Endothelial cell of umbilical vein (primary cell): ENCODE measurements at regions of chr20 and their contacts with region 1.

Region 1: DNA sequence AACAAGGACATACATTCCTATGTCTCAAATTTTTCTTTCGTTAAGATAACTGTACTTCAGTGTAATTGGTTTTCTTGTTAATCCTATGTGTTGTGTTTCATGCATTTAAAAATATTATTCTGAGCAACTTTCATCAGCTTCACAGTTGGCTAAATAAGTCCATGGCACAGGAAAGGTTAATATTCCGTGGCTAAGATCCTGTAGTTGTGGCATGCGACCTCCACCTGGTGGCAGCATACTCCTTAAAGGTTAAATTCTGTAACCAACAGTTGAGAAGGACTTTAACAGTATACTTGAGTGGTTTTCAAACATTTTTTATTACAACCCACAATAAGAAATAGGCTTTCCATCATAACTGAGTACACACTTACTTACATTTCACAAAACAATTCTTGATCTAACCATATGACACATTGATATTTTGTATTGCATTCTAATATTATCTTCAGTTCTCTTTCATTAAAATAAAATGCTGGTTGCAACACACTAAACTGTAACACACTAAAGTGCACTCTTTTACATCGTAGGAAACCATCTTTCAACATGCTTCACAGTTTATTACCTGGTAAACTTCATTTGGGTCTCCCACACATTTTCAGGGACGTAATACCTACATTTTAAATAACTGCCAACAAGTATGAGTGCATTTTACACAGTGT is 118.3 kb downstream of the SLX4IP start:
- DNase-seq: peak; percentile 84
- H3K4me3 ChIP-seq: no peak overlapping the region
- H3K27ac ChIP-seq: no peak overlapping the region
- H3K4me1 ChIP-seq: peaks cover 15% of the 10 kb centered on the region
- H3K27me3 ChIP-seq: no peaks in the 10 kb centered on the region
- CTCF ChIP-seq: peak; percentile 64 to 70
- POLR2A ChIP-seq: no peak

Region 2: DNA sequence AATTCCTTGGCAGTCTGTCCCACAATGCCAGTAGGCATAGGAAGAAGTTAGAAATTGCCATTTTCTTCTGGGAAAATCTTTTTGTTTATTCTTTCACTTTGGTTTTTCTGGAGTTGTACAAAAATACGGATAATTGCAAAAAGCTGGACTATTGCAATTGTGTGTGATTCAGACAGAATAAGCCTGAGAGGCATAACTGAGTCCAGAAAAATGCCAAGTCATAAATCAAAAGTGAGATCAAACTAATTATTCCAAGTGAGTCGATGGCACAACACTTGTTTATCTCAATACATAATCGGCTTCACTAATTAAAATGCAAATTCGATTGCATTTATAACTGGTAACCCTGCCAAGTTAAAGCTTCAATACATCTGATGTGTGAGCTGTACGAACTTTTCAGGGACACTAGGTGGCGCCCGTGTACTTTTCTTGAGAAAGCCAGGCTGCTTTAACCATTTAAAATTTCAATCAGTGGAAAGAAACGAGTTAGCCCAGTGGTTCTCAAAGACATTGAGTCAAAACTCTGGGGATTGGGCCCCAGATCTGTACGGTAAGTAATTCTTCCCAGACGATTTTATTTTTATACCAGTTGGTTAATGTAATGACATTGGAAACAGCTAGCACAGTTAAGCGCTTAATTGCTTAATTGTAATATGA is 936.5 kb before region 1 on chr20:
- CTCF ChIA-PET with region 1: interaction called, 4 read pairs
- POLR2A ChIA-PET with region 1: no interaction called
- dilution Hi-C with region 1: no loop called
- intact Hi-C with region 1: loop called (anchors 10 kb)
- DNase-seq: peak; percentile 62
- H3K4me3 ChIP-seq: no peak overlapping the region
- H3K27ac ChIP-seq: no peak overlapping the region
- H3K4me1 ChIP-seq: no peaks in the 10 kb centered on the region
- H3K27me3 ChIP-seq: peaks cover 7 to 8% of the 10 kb centered on the region in 2 experiments
- CTCF ChIP-seq: peak; percentile 69 to 70
- POLR2A ChIP-seq: no peak

Region 3: DNA sequence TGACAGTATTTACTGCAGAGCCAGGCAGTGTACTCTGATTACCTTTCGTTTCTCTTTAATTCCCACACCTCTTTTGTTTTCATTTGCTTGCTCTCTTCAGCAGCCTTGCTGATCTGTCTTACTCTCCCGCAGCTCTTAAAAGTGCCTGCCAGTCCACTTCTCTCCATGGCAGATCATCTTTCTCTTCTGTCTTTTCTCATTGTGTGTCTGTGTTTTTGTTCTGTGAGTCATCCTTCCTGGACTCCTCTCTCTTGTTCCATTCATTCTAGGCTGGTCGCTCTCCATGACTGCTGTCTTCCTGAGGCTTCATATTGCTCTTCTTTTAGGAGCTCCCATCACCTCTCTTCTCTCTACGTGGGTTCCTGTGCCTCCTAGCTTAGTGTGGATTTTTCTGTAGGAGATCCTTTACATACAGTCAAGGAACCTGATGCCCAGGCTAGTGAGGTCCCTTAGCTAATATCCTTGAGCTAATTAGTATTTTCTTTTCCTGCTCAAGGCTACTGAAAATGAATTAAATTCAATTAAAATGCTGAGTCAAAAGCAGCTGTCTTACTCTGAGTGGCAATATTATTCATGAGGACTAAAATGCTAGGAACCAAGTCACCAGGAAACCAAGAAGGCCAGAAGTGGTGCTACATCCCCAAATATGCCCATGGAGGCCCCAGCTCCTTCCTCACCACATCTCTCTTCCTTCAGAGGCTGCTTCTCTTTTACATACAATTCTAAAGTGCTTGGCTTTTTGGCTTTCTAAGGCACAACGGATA is 32.2 kb before region 1 on chr20:
- CTCF ChIA-PET with region 1: interaction called, 10 read pairs
- POLR2A ChIA-PET with region 1: no interaction called
- dilution Hi-C with region 1: no loop called
- intact Hi-C with region 1: no loop called
- DNase-seq: peak; percentile 77
- H3K4me3 ChIP-seq: no peak overlapping the region
- H3K27ac ChIP-seq: peak overlapping the region; percentile 8
- H3K4me1 ChIP-seq: peaks cover 28% of the 10 kb centered on the region
- H3K27me3 ChIP-seq: no peaks in the 10 kb centered on the region
- CTCF ChIP-seq: no peak
- POLR2A ChIP-seq: no peak

Region 4: DNA sequence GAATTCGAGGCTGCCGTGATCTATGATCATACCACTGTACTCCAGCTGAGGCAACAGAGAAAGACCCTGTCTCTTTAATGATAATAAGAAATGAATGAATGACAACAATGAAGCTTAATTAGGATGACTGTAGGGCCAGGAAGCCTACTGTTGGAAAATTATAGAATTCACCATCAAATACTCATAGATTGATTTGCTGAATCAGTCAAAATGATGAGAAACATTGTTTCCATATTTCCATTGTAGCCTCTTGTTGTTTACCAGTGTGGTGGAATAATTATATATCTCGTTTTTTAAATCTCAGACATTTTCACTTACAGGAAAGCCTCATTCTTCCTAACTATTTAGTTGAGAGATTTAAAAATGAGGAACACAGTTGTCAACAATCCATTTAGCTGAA is 24.2 kb after region 1 on chr20:
- CTCF ChIA-PET with region 1: no interaction called
- POLR2A ChIA-PET with region 1: no interaction called
- dilution Hi-C with region 1: no loop called
- intact Hi-C with region 1: no loop called
- DNase-seq: no peak
- H3K4me3 ChIP-seq: no peak overlapping the region
- H3K27ac ChIP-seq: no peak overlapping the region
- H3K4me1 ChIP-seq: peaks cover 25% of the 10 kb centered on the region
- H3K27me3 ChIP-seq: no peaks in the 10 kb centered on the region
- CTCF ChIP-seq: no peak
- POLR2A ChIP-seq: no peak

Region 5: GRCh38 chr20:10761232-10761631 is 207.8 kb after region 1 on chr20:
- CTCF ChIA-PET with region 1: interaction called, 3 read pairs
- POLR2A ChIA-PET with region 1: no interaction called
- dilution Hi-C with region 1: no loop called
- intact Hi-C with region 1: loop called (anchors 10 kb)
- DNase-seq: peak; percentile 93
- H3K4me3 ChIP-seq: no peak overlapping the region
- H3K27ac ChIP-seq: peak overlapping the region; percentile 78
- H3K4me1 ChIP-seq: peaks cover 41% of the 10 kb centered on the region
- H3K27me3 ChIP-seq: no peaks in the 10 kb centered on the region
- CTCF ChIP-seq: no peak
- POLR2A ChIP-seq: peak; percentile 36

Region 6: GRCh38 chr20:10922941-10923340 is 369.5 kb after region 1 on chr20:
- CTCF ChIA-PET with region 1: no interaction called
- POLR2A ChIA-PET with region 1: no interaction called
- dilution Hi-C with region 1: no loop called
- intact Hi-C with region 1: loop called (anchors 10 kb)
- DNase-seq: no peak
- H3K4me3 ChIP-seq: no peak overlapping the region
- H3K27ac ChIP-seq: no peak overlapping the region
- H3K4me1 ChIP-seq: peaks cover 29% of the 10 kb centered on the region
- H3K27me3 ChIP-seq: no peaks in the 10 kb centered on the region
- CTCF ChIP-seq: no peak
- POLR2A ChIP-seq: no peak

Region 7: DNA sequence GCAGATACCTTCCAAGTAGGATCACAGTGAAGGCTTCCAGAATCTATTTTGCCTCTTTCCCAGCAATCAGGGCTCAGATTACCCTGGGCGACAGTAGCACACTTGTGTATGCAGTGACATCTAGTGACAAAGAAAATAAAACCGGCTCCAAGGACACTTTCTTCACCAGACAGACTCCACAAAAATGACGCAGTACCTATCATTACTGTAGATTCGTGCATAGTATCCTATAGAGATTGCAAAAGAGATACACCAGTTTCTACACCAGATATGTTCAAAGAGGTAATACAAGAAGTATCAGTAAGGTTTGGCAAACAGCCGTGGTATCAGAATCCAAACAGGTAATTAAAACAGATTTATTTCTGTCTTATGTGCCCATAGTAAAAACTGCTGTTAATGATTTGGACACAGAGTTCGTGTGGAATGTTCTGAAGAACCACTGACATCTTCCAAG is 720.7 kb after region 1 on chr20:
- CTCF ChIA-PET with region 1: interaction called, 4 read pairs
- POLR2A ChIA-PET with region 1: no interaction called
- dilution Hi-C with region 1: no loop called
- intact Hi-C with region 1: loop called (anchors 1 kb)
- DNase-seq: peak; percentile 74
- H3K4me3 ChIP-seq: no peak overlapping the region
- H3K27ac ChIP-seq: no peak overlapping the region
- H3K4me1 ChIP-seq: no peaks in the 10 kb centered on the region
- H3K27me3 ChIP-seq: no peaks in the 10 kb centered on the region
- CTCF ChIP-seq: peak; percentile 42 to 46
- POLR2A ChIP-seq: no peak

Region 8: DNA sequence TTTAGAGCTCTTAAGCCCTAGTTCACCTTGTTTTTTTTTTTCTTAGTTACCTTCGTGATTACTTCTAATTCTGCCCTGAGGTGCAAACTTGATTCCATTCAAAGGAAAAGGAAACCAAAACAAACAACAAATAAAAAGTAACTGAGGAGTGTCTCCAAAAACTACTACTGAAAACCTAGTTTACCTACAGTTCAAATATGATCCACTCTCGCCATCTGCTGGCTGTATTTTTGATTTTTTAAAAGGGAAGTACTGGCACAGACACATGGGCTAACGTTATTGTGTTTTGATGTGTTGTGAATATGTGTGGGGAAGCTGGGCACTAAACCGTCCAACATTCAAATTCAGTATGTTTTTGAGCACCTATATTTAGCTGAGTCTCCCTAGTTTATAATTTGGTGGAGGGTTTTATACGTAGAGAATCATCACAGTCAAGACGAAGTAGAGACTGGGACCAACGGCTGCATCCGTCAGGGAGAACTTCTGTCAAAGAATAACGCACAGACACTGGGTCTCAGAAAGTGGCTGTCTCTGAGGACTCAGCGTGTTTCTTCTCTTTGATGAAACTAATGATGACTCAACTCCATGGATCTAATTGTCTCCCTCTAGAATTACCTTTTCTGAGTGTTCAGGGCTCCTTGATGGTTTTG is 990.7 kb after region 1 on chr20:
- CTCF ChIA-PET with region 1: interaction called, 26 read pairs
- POLR2A ChIA-PET with region 1: no interaction called
- dilution Hi-C with region 1: no loop called
- intact Hi-C with region 1: loop called (anchors 1 kb)
- DNase-seq: peak; percentile 74
- H3K4me3 ChIP-seq: no peak overlapping the region
- H3K27ac ChIP-seq: no peak overlapping the region
- H3K4me1 ChIP-seq: peaks cover 9% of the 10 kb centered on the region
- H3K27me3 ChIP-seq: no peaks in the 10 kb centered on the region
- CTCF ChIP-seq: peak; percentile 16 to 44
- POLR2A ChIP-seq: no peak